Activated B cell treated with CpG ODN at 0.5 μM for 24 hours (primary cell): ENCODE measurements at regions of chr10 and their contacts with region 1.

Region 1: GRCh38 chr10:13299437-13300287 is at the start of gene PHYH:
- DNase-seq: peak; percentile 83
- ATAC-seq: peak; percentile 69
- H3K4me3 Mint-ChIP-seq: peak within 1 kb of the TSS; percentile 87
- H3K27ac Mint-ChIP-seq: peak within 1 kb of the TSS; percentile 82
- H3K4me1 Mint-ChIP-seq: peaks cover 27% of the 10 kb centered on the region
- H3K27me3 Mint-ChIP-seq: no peaks in the 10 kb centered on the region
- CTCF ChIP-seq: no peak
- total RNA-seq, gene PHYH: 10.4 and 10.8 TPM in 2 replicates

Region 2: DNA sequence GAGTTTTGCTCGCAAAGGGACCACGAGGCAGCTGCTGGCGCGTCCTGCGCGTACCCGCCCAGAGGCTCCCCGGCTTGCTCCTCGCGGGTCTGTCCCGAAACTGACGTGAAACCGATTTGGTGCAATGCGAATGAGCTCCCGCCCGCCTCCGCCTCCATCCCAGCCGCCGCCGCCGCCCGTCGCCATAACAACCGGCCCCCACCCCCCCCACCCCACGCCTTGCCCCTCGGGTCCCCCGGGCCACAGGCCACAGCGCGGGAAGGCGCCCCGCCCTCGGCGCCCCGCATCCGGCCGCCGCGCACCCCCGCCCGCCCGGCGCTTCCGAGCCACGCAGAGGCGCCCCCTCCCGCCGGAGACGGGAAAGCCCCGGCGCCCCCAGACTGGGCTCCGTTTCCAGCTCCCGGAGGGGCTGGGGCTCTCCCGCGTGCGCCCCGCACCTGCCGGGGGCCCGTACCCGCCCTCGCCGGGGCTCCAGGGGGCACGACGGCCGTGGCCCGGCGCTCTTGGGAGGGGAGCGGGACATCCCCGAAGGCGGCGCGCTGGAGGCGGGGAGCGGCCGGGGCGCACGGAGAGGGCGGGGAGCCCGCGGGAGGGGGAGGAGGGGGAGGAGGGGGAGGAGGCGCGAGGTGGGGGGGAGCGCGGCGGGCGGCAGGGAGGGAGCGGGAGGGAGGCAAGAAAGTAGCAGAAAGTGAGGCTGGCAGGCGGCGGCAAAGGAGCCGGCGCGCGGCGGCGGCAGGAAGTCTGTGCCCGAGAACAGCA is 950.6 kb before region 1 on chr10 and contains the start of gene CAMK1D:
- CTCF ChIA-PET with region 1: interaction called, 3 read pairs
- POLR2A ChIA-PET with region 1: no interaction called
- intact Hi-C with region 1: loop called (anchors 5 kb)
- DNase-seq: peak; percentile 87
- ATAC-seq: peak; percentile 66
- H3K4me3 Mint-ChIP-seq: peak within 1 kb of the TSS; percentile 98
- H3K27ac Mint-ChIP-seq: peak within 1 kb of the TSS; percentile 98
- H3K4me1 Mint-ChIP-seq: peaks cover 61% of the 10 kb centered on the region
- H3K27me3 Mint-ChIP-seq: no peaks in the 10 kb centered on the region
- CTCF ChIP-seq: no peak
- total RNA-seq, gene CAMK1D: 51.7 and 58.8 TPM in 2 replicates

Region 3: GRCh38 chr10:13016426-13016825 is 283.2 kb before region 1 on chr10:
- CTCF ChIA-PET with region 1: no interaction called
- POLR2A ChIA-PET with region 1: no interaction called
- intact Hi-C with region 1: no loop called
- DNase-seq: no peak
- ATAC-seq: no peak
- H3K4me3 Mint-ChIP-seq: no peak overlapping the region
- H3K27ac Mint-ChIP-seq: no peak overlapping the region
- H3K4me1 Mint-ChIP-seq: no peaks in the 10 kb centered on the region
- H3K27me3 Mint-ChIP-seq: peaks cover 4% of the 10 kb centered on the region
- CTCF ChIP-seq: no peak

Region 4: DNA sequence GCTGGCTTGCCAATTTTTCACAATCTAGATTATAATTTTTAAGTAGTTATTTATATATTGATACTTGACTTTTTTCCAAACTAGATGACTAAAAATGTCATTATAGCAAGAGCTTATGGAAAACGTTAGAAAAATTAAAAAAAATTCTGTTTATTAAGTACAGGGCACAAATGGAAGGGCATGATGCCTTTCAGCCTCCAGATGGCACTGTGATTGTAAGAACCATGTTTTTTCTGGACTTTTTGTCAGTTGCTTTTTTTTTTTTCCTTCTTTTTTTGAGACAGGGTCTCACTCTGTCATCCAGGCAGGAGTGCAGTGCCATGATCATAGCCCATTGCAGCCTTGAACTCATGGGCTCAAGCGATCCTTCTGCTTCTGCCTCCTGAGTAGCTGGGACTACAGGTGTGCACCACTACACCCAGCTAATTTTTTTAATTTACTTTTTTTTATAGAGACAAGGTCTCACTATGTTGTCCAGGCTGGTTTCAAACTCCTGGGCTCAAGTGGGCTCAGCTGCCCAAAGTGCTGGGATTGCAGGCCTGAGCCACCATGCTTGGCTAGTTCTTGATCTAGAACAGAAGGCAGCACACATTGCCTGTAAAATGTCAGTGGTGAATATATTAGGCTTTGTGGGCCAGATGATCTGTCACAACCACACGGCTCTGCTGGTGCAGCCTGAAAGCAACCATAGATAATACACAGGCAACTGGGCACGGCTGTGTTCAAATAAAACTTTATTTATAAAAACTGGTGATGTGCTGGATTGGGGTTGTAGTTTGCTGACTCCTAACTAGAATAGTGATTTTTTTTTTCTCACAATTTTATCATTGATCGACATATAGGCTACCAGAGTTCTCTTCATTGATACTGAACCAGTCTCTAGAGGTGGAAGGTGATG is 92.9 kb before region 1 on chr10:
- CTCF ChIA-PET with region 1: interaction called, 10 read pairs
- POLR2A ChIA-PET with region 1: interaction called, 3 read pairs
- intact Hi-C with region 1: loop called (anchors 1 kb)
- DNase-seq: no peak
- ATAC-seq: no peak
- H3K4me3 Mint-ChIP-seq: no peak overlapping the region
- H3K27ac Mint-ChIP-seq: no peak overlapping the region
- H3K4me1 Mint-ChIP-seq: no peaks in the 10 kb centered on the region
- H3K27me3 Mint-ChIP-seq: no peaks in the 10 kb centered on the region
- CTCF ChIP-seq: no peak

Region 5: DNA sequence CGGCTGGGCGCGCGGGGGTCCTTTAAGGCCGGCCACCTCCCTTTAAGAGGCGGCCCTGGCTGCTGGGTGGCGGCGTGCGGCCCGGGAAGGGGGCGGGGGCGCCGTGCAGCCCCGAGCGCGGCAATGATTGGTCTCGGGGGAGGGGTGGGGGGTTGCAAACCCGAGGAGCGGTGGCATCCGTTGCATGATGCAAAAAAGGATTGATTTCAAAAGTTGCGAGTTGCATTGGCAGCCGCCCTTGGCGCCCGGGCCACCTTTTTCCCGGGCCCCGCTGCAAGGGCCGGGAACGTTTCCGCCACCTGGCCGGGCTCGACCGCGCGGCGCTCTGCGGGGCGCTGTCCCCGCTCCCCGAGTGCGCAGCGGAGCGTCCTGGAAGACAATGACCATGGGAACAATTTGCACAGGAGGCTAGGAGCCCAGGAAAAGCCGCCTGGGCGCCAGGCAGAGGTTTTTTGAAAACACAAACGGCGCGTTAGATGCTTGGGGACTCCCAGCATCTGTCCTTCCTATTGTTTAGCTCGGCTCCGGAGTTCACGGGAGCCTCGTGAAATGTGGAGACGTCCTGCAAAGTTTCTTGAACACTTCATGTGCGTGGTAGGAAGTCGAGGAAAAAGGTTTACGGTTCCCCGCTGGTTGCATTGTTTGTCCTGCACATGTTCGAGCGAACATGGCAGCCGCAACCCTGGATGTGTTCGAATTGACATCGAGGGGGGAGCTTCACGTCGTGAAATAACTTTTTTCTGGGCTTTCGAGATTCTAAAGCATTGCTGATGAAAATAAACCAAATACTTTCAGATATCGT is 48.8 kb after region 1 on chr10 and contains the start of gene SEPHS1:
- CTCF ChIA-PET with region 1: interaction called, 20 read pairs
- POLR2A ChIA-PET with region 1: interaction called, 68 read pairs
- intact Hi-C with region 1: loop called (anchors 1 kb)
- DNase-seq: peak; percentile 65
- ATAC-seq: peak; percentile 66
- H3K4me3 Mint-ChIP-seq: peak within 1 kb of the TSS; percentile 89
- H3K27ac Mint-ChIP-seq: peak within 1 kb of the TSS; percentile 88
- H3K4me1 Mint-ChIP-seq: peaks cover 59% of the 10 kb centered on the region
- H3K27me3 Mint-ChIP-seq: peaks cover 8% of the 10 kb centered on the region
- CTCF ChIP-seq: no peak
- total RNA-seq, gene SEPHS1: 36.7 and 38.0 TPM in 2 replicates

Region 6: DNA sequence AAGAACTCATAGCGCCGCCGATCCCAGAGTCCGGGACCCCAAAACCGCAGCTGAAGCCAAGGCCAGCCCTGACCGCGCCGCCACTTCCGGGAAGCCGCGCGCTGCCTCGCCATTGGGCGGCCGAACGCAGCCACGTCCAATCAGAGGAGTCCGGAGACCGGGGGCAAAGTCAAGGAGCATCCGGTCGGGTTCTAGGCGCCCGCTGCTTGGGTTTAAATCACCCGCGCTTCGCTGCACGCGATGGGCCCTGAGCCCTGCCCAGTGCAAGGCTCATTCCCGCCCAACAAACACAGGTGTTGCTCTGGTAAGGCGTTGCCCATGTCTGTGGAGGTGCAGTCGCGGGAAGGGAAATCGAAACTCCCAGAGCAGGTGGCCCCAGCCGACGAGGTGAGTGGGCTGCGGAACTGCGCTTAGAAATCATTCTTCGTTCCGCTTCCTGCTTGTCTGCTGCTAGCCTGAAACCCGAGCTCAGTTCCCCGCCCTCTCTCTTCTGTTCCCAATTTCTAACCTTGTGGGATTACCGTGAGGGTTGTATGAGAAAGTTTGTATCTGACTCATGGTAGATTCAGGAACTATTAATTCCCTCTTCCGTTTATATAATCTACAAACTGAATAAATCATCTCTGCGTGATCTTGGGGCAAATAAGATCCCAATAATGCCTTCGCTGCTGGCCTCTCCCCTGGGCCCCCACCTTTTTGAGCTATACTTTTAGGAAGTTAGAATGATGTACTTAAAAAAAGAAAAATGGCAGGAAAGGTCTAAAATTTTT is 1654.5 kb after region 1 on chr10 and contains the start of gene DCLRE1C:
- CTCF ChIA-PET with region 1: no interaction called
- POLR2A ChIA-PET with region 1: no interaction called
- intact Hi-C with region 1: loop called (anchors 5 kb)
- DNase-seq: peak; percentile 77
- ATAC-seq: peak; percentile 78
- H3K4me3 Mint-ChIP-seq: peak within 1 kb of the TSS; percentile 90
- H3K27ac Mint-ChIP-seq: peak within 1 kb of the TSS; percentile 96
- H3K4me1 Mint-ChIP-seq: peaks cover 56% of the 10 kb centered on the region
- H3K27me3 Mint-ChIP-seq: no peaks in the 10 kb centered on the region
- CTCF ChIP-seq: no peak
- total RNA-seq, gene DCLRE1C: 38.0 and 43.8 TPM in 2 replicates